ENCODE measurements at regions of chr20 and their contacts with region 1.

Region 1: DNA sequence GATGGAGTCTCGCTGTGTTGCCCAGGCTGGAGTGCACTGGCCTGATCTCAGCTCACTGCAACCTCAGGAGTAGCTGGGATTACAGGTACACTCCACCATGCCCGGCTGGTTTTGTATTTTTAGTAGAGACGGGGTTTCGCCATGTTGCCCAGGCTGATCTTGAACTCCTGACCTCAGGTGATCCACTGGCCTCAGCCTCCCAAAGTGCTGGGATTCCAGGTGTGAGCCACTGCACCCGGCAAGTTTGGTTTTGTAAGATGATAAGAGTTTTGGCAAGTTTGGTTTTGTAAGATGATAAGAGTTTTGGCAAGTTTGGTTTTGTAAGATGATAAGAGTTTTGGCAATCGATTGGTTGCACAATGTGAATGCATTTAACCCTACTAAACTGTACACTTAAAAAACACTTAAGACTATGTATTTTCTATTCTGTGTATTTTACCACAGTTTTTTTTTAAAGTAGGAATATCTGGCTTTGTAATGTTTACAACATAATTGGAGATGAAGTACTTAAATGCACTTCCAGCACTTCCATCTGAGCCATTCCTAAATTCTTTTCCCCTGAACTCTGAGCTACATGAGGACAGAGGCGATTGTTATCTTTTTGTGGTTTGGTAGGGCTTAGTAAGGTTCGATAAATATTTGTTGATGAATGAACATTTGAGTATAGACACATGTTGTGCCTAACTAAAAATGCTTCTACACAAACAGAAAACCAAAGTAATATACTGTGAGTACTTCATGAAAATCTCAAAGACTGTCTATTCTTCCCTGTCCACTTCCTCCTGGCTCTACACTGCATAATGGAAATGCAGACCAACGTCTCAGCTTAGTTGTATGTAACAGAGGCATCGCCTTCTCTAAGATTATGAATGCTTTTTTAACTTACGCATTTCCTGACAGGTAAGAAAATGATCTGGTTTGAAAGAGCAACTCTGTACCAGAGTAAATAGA is 18.8 kb downstream of the SAMHD1 start:
- DNase-seq: no peak
- ATAC-seq: no peak
- H3K4me3 ChIP-seq: no peak overlapping the region
- H3K27ac ChIP-seq: no peak overlapping the region
- H3K4me1 ChIP-seq: no peaks in the 10 kb centered on the region
- H3K27me3 ChIP-seq: no peaks in the 10 kb centered on the region
- CTCF ChIP-seq: no peak

Region 2: GRCh38 chr20:36591854-36592641 is 340.7 kb before region 1 on chr20:
- CTCF ChIA-PET with region 1: interaction called, 10 read pairs
- POLR2A ChIA-PET with region 1: no interaction called
- in situ Hi-C with region 1: no loop called
- intact Hi-C with region 1: no loop called
- DNase-seq: no peak
- ATAC-seq: no peak
- H3K4me3 ChIP-seq: no peak overlapping the region
- H3K27ac ChIP-seq: no peak overlapping the region
- H3K4me1 ChIP-seq: no peaks in the 10 kb centered on the region
- H3K27me3 ChIP-seq: no peaks in the 10 kb centered on the region
- CTCF ChIP-seq: no peak; the same call in 1 of the 2 replicates